ENCODE measurements at regions of chr2 and their contacts with region 1.

Region 1: DNA sequence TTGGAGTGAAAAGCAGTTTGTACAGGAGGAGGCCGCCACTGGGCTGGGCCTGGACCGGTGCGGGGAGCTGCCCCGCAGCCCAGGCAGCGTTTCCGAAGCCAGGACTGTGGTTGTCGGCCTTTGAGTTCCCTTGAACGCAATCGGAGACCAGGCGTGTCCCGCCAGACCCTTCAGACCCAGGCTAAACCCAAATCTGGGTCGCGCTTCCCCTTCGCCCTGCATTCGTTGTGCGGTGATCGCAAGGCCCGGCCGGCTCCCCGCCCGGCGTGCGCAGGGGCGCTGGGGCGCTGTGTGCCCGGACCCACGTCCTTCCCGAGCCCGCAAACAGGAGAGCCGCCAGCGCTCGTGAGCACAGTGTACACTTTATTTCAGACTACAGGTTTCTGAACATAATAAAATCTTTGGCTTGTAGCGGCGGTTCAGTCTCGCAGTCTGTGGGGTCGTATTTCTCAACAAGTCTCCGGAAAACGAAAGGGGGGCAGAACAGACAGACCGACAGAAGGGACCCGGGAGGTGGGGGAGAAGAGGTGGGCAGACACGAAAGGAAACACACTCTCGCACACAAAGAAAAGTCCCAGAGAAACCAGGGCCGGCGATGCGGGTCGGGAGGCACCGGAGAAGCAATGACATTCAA is 5.5 kb downstream of the EN1 start:
- DNase-seq: no peak
- ATAC-seq: no peak
- H3K4me3 ChIP-seq: no peak overlapping the region
- H3K27ac ChIP-seq: no peak overlapping the region
- H3K4me1 ChIP-seq: peaks cover 3 to 22% of the 10 kb centered on the region in 2 experiments; a peak in 4 of 5 replicates
- H3K27me3 ChIP-seq: peaks cover 17 to 37% of the 10 kb centered on the region in 2 experiments; a peak in 4 of 5 replicates
- CTCF ChIP-seq: no peak
- EP300 ChIP-seq: no peak
- POLR2A ChIP-seq: no peak
- RAD21 ChIP-seq: no peak

Region 2: GRCh38 chr2:118823633-118824032 is 18.3 kb before region 1 on chr2:
- CTCF ChIA-PET with region 1: no interaction called
- POLR2A ChIA-PET with region 1: no interaction called
- in situ Hi-C with region 1: no loop called
- intact Hi-C with region 1: loop called (anchors 2 kb)
- DNase-seq: no peak
- ATAC-seq: peak; percentile 74
- H3K4me3 ChIP-seq: no peak overlapping the region
- H3K27ac ChIP-seq: no peak overlapping the region
- H3K4me1 ChIP-seq: peaks cover 3 to 17% of the 10 kb centered on the region in 2 experiments
- H3K27me3 ChIP-seq: no peaks in the 10 kb centered on the region; a peak in 1 of 5 replicates
- CTCF ChIP-seq: no peak
- EP300 ChIP-seq: no peak
- POLR2A ChIP-seq: no peak
- RAD21 ChIP-seq: no peak

Region 3: DNA sequence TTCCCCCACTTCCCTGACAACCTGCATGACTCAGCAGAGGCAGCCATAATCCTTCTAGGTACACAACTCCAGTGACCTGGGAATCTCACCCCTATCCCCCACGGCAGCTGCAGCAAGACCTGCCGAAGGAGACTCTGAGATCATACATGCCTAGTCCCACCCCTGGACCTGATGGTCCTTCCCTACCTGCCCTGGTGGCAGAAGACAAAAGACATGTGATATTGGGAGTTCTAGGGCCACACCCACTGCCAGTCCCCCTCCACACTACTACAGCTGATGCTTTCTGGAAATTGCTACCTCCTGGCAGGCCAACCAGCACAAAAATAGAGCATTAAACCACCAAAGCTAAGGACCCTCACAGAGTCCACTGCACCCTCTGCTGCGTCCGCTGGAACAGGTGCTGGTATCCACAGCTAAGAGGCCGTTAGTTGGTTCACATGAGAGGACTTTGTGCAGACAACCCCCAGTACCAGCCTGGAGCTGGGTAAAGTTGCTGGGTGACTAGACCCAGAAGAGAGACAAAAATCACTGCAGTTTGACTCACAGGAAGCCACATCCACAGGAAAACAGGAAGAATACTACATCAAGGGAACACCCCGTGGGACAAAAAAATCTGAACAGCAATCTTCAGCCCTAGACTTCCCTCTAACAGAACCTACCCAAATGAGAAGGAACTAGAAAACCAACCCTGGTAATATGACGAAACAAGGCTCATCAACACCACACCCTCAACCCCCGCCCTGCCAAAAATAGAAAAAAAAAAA is 112.5 kb after region 1 on chr2:
- CTCF ChIA-PET with region 1: no interaction called
- POLR2A ChIA-PET with region 1: no interaction called
- in situ Hi-C with region 1: no loop called
- intact Hi-C with region 1: no loop called
- DNase-seq: no peak
- ATAC-seq: no peak
- H3K4me3 ChIP-seq: no peak overlapping the region
- H3K27ac ChIP-seq: no peak overlapping the region; the same call in 2 of the 3 replicates
- H3K4me1 ChIP-seq: no peaks in the 10 kb centered on the region; a peak in 1 of 5 replicates
- H3K27me3 ChIP-seq: peaks cover 0 to 6% of the 10 kb centered on the region in 2 experiments; a peak in 1 of 5 replicates
- CTCF ChIP-seq: no peak
- EP300 ChIP-seq: no peak
- POLR2A ChIP-seq: no peak
- RAD21 ChIP-seq: no peak

Measured in K562 (cell line).